Thyroid gland (tissue), 4 donors: ENCODE measurements at regions of chrX and their contacts with region 1.

Region 1: GRCh38 chrX:133670383-133670782 is 255.1 kb upstream of the GPC4 start:
- DNase-seq: no peak
- H3K4me3 ChIP-seq: no peak overlapping the region
- H3K27ac ChIP-seq: no peak overlapping the region
- H3K4me1 ChIP-seq: no peaks in the 10 kb centered on the region
- H3K27me3 ChIP-seq: no peaks in the 10 kb centered on the region
- CTCF ChIP-seq: peak; percentile 39 to 78 (median 60)
- POLR2A ChIP-seq: no peak

Region 2: DNA sequence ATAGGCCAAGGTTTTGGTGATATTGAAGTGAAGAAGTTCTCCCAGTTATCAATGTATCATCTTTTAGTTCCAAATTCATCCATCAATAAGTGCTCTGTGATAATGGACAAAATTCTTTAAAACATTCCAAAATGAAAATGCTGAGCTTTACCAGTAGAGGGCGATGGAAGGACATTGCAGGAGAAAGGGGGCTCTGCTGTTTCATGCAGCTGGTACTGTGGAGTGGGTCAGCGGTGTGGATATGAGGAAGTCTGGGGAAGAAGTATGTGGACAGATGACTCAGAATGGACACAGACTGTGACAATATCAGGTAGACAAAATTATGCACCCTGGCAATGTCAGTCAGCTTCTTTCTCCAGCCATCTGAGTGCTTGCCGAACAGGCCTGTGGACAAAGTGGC is 665.3 kb before region 1 on chrX:
- intact Hi-C with region 1: loop called (anchors 5 kb)
- DNase-seq: no peak
- H3K4me3 ChIP-seq: no peak overlapping the region
- H3K27ac ChIP-seq: no peak overlapping the region
- H3K4me1 ChIP-seq: no peaks in the 10 kb centered on the region
- H3K27me3 ChIP-seq: no peaks in the 10 kb centered on the region
- CTCF ChIP-seq: peak in 3 of 6 experiments; percentile 47 to 52 (median 49)
- POLR2A ChIP-seq: no peak

Region 3: GRCh38 chrX:133335027-133335426 is 335.4 kb before region 1 on chrX:
- intact Hi-C with region 1: loop called (anchors 10 kb)
- DNase-seq: peak in 1 of 2 donors; percentile 3
- H3K4me3 ChIP-seq: no peak overlapping the region
- H3K27ac ChIP-seq: no peak overlapping the region
- H3K4me1 ChIP-seq: no peaks in the 10 kb centered on the region
- H3K27me3 ChIP-seq: no peaks in the 10 kb centered on the region
- CTCF ChIP-seq: peak in 4 of 6 experiments; percentile 37 to 50 (median 46)
- POLR2A ChIP-seq: no peak

Region 4: DNA sequence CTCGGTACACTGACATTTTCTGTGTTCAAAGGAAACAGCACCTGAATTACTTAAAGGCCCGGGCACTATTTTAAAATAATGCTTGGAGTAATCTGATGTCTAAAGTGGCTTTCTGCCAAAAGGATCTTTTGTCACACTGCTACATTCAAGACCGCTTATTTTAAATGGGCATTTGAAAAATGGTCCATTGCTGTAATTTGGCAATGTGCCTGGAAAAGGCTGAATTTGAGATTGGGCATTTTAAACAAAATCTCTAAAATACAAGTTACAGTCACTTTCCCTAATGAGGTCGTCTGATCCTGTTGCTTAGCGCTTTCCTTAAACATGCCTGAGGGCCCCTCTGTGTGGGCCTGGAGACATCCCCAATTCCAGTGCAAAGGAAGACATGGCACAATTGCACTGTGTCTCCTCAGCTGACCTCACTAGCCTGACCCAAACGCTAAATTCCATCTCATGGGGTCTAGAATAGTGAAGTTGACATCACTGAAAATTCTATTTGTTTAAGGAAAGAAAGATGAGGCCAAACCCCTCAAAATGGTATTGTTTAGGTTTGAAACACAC is 100.8 kb after region 1 on chrX:
- intact Hi-C with region 1: no loop called
- DNase-seq: no peak
- H3K4me3 ChIP-seq: no peak overlapping the region
- H3K27ac ChIP-seq: no peak overlapping the region
- H3K4me1 ChIP-seq: no peaks in the 10 kb centered on the region
- H3K27me3 ChIP-seq: no peaks in the 10 kb centered on the region
- CTCF ChIP-seq: no peak
- POLR2A ChIP-seq: no peak